PC-9 (cell line): ENCODE measurements at regions of chr20 and their contacts with region 1.

Region 1: DNA sequence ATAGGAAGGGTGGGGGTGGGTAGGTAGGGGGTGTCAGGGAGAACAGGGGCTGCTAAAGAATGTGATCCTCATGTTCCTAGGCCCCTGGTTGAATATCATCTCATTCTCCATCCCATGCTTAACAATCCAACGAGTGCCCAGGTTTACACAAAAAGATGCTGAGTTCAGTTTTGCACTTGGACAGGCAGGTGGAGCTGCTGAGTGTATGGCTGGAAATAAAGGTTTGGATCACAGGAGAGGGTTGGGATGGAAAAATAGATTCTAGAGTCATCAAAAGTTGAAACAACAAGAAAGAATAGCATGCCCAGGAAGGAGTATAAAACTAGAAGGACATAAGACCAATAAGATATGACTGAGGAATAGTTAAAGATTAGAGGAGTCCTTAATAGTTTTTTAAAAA is 14.2 kb downstream of the CHD6 start:
- DNase-seq: no peak
- H3K4me3 ChIP-seq: no peak overlapping the region
- H3K27ac ChIP-seq: no peak overlapping the region
- H3K4me1 ChIP-seq: no peaks in the 10 kb centered on the region
- H3K27me3 ChIP-seq: no peaks in the 10 kb centered on the region
- CTCF ChIP-seq: no peak; the same call in 1 of the 2 replicates

Region 2: DNA sequence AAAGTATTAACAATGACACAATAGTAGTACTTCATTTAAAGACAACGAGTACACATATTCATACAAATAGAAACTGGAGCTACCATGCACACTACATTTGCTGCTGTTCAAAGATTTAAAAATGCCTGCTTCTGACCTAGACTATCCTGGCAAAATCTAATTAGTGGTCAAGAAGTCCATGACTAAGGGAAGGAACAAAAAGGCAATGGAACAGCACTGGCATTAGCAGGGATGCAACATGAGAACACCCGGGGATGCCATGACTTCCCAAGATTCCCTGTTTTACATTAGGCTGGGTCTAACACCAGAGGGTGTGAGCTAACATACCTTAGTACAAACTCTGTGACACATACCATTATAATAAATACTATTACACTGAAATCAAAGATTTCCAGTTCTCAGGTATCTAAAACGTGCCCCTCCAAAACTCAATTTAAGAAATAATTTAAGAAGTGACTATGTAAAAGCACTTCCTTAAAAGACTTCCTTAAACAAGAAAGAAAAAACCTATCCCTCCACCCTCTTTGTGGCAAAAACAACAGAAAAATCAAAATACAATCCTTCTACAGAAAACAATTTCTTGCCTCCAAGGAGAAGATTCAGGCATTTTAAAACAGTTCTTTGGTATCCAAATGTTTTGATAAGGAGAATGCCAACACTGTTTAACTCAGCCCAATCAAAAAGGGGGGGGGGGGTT is 11.3 kb before region 1 on chr20:
- CTCF ChIA-PET with region 1: no interaction called
- POLR2A ChIA-PET with region 1: interaction called, 22 read pairs
- intact Hi-C with region 1: no loop called
- DNase-seq: no peak
- H3K4me3 ChIP-seq: no peak overlapping the region
- H3K27ac ChIP-seq: no peak overlapping the region
- H3K4me1 ChIP-seq: no peaks in the 10 kb centered on the region
- H3K27me3 ChIP-seq: no peaks in the 10 kb centered on the region
- CTCF ChIP-seq: no peak